ENCODE measurements at regions of chr7 and their contacts with region 1.

Region 1: GRCh38 chr7:43590862-43591550 is 8.1 kb downstream of the STK17A start:
- DNase-seq: no peak
- ATAC-seq: no peak
- H3K4me3 ChIP-seq: no peak overlapping the region
- H3K4me3 Mint-ChIP-seq: peak overlapping the region; percentile 62 to 96 (median 69)
- H3K27ac ChIP-seq: peak overlapping the region; percentile 95
- H3K27ac Mint-ChIP-seq: peak overlapping the region; percentile 80 to 86
- H3K4me1 ChIP-seq: peaks cover 46 to 79% of the 10 kb centered on the region in 2 experiments
- H3K4me1 Mint-ChIP-seq: peaks cover 83 to 89% (median 84%) of the 10 kb centered on the region in 3 donors
- H3K27me3 ChIP-seq: no peaks in the 10 kb centered on the region
- H3K27me3 Mint-ChIP-seq: no peaks in the 10 kb centered on the region

Region 2: GRCh38 chr7:43516581-43517342 is 74.2 kb before region 1 on chr7:
- CTCF ChIA-PET with region 1: no interaction called
- POLR2A ChIA-PET with region 1: no interaction called
- DNase-seq: peak in 1 of 35 experiments; percentile 4
- ATAC-seq: peak in 1 of 4 experiments; percentile 52
- H3K4me3 ChIP-seq: no peak overlapping the region
- H3K4me3 Mint-ChIP-seq: no peak overlapping the region
- H3K27ac ChIP-seq: no peak overlapping the region
- H3K27ac Mint-ChIP-seq: no peak overlapping the region
- H3K4me1 ChIP-seq: no peaks in the 10 kb centered on the region
- H3K4me1 Mint-ChIP-seq: peaks cover 2 to 7% (median 4%) of the 10 kb centered on the region in 3 donors
- H3K27me3 ChIP-seq: peaks cover 0 to 4% of the 10 kb centered on the region in 2 experiments
- H3K27me3 Mint-ChIP-seq: peaks cover 9 to 29% of the 10 kb centered on the region in 2 donors

Region 3: DNA sequence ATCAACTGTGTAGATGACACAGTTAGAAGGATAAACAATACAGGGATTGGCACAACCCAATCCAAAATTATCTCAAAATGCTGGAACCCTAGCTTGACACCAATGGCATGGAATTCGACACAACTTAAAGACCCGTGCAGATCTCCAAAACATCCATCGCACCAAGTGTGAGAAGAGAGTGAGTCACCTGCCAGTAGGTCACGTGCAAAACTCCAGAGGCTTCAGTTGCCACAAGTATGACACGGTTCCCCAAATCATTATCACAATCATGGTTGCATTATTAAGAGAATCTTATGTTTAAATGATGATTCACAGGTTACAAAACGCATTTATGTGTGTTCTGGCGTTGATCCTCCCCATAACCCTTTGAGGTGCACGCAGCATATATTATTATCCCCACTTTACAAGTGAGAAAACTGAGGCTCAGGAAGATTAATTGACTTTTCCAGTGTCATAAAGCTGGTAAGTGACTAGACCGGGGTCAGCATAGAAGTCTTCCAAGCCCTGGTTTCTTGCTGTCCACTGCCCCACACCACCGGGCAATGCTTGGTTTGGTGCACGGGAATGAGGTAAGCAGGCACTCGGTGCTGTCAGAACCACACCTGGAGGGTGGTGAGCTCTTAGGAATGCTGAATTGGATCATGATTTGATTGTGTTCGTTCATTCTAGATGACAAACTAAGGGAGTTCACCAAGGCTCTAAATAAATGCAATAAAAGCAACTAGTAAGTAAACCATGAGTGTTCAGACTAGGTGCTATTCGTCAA is 31.7 kb before region 1 on chr7:
- CTCF ChIA-PET with region 1: no interaction called
- POLR2A ChIA-PET with region 1: no interaction called
- DNase-seq: no peak
- ATAC-seq: no peak
- H3K4me3 ChIP-seq: no peak overlapping the region
- H3K4me3 Mint-ChIP-seq: no peak overlapping the region
- H3K27ac ChIP-seq: no peak overlapping the region
- H3K27ac Mint-ChIP-seq: no peak overlapping the region
- H3K4me1 ChIP-seq: peaks cover 5 to 10% of the 10 kb centered on the region in 2 experiments
- H3K4me1 Mint-ChIP-seq: peaks cover 17 to 23% (median 17%) of the 10 kb centered on the region in 3 donors
- H3K27me3 ChIP-seq: peaks cover 4 to 10% of the 10 kb centered on the region in 2 experiments
- H3K27me3 Mint-ChIP-seq: peaks cover 15 to 28% of the 10 kb centered on the region in 2 donors

Region 4: GRCh38 chr7:43602271-43602670 is 11.3 kb after region 1 on chr7:
- CTCF ChIA-PET with region 1: interaction called, 5 to 7 read pairs
- POLR2A ChIA-PET with region 1: interaction called, 8 to 13 read pairs
- DNase-seq: no peak
- ATAC-seq: no peak
- H3K4me3 ChIP-seq: no peak overlapping the region
- H3K4me3 Mint-ChIP-seq: no peak overlapping the region
- H3K27ac ChIP-seq: no peak overlapping the region
- H3K27ac Mint-ChIP-seq: no peak overlapping the region
- H3K4me1 ChIP-seq: peaks cover 52 to 53% of the 10 kb centered on the region in 2 experiments
- H3K4me1 Mint-ChIP-seq: peaks cover 49 to 51% (median 50%) of the 10 kb centered on the region in 3 donors
- H3K27me3 ChIP-seq: no peaks in the 10 kb centered on the region
- H3K27me3 Mint-ChIP-seq: no peaks in the 10 kb centered on the region

Region 5: DNA sequence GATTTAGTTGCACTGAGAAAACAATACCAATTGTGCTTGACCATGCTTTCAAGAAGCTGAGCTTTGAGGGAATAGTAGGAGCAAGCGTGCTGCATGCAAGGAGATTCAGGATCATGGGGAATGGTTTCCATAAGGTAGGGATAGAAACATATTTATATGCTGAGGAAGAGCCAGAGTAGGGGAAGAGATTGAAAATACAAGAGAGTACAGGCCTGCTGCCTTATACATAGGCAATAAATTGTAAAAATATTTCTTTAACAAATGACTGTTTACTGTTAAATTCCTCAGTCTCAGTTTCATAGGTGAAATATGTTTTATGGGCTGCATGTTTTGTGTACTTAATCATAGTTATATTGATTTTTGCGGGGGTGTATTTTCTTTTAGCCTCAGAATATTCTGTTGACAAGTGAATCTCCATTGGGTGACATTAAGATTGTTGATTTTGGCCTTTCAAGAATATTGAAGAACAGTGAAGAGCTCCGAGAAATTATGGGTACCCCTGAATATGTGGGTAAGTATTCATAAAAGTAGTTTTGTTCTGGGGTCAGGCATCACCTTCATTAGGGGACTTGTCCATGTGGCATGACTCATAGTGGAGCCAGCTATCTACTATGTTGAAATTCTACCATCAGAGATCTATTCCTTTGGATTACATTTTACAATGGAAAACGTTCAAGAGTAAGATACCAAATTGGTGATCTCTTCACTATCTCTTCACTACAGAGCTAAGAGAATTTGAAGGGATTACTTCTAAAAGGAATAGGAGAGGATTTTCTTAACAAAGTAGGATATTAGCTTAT is 28.4 kb after region 1 on chr7:
- CTCF ChIA-PET with region 1: interaction called, 9 to 15 read pairs
- POLR2A ChIA-PET with region 1: interaction called, 5 to 27 read pairs
- DNase-seq: no peak
- ATAC-seq: no peak
- H3K4me3 ChIP-seq: no peak overlapping the region
- H3K4me3 Mint-ChIP-seq: no peak overlapping the region
- H3K27ac ChIP-seq: peak overlapping the region; percentile 20
- H3K27ac Mint-ChIP-seq: no peak overlapping the region
- H3K4me1 ChIP-seq: peaks cover 67 to 72% of the 10 kb centered on the region in 2 experiments
- H3K4me1 Mint-ChIP-seq: peaks cover 7 to 54% (median 35%) of the 10 kb centered on the region in 3 donors
- H3K27me3 ChIP-seq: no peaks in the 10 kb centered on the region
- H3K27me3 Mint-ChIP-seq: no peaks in the 10 kb centered on the region

Region 6: DNA sequence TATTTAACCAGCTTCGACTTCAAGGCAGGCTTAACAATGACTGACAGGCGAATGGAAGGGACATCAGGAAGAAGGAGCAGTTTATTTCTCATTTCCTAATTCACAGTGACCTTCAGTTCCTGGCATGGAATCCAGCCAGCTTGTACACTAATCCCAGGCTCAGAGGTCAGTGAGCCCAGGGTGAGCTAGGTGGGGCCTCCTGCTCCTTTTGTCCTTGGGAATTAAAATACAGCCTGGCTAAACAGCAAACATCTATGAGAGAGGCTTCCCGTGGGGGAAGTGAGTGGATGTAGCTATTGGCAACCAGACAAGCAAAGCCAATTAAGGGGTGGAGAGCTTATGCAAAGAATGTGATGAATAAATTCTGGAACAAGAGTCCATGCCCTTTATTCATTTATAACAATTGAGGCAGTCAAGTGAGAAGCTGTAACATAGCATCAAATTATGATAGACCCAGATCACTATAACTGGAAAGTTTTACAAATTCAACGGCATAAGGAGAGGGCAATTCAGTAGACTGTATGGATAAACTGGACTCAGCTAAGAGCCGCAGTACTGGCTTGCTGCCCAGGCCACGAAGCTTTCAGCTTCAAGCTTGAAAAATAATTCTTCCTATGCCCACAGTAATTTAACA is 49.0 kb after region 1 on chr7:
- CTCF ChIA-PET with region 1: interaction called, 3 to 6 read pairs
- POLR2A ChIA-PET with region 1: interaction called, 3 to 10 read pairs
- DNase-seq: no peak
- ATAC-seq: no peak
- H3K4me3 ChIP-seq: no peak overlapping the region
- H3K4me3 Mint-ChIP-seq: peak overlapping the region in 1 of 3 donors; percentile 72
- H3K27ac ChIP-seq: peak overlapping the region; percentile 62
- H3K27ac Mint-ChIP-seq: peak overlapping the region; percentile 78 to 89
- H3K4me1 ChIP-seq: peaks cover 70 to 79% of the 10 kb centered on the region in 2 experiments
- H3K4me1 Mint-ChIP-seq: peaks cover 94 to 97% (median 96%) of the 10 kb centered on the region in 3 donors
- H3K27me3 ChIP-seq: no peaks in the 10 kb centered on the region
- H3K27me3 Mint-ChIP-seq: no peaks in the 10 kb centered on the region

Region 7: GRCh38 chr7:43869006-43869866 is 278.2 kb after region 1 on chr7 and contains the start of gene MRPS24:
- CTCF ChIA-PET with region 1: no interaction called
- POLR2A ChIA-PET with region 1: no interaction called
- DNase-seq: peak; percentile 88 to 98 (median 94)
- ATAC-seq: peak; percentile 97 to 99 (median 98)
- H3K4me3 ChIP-seq: peak within 1 kb of the TSS; percentile 72 to 83
- H3K4me3 Mint-ChIP-seq: peak within 1 kb of the TSS; percentile 90 to 95 (median 92)
- H3K27ac ChIP-seq: peak within 1 kb of the TSS; percentile 56
- H3K27ac Mint-ChIP-seq: peak within 1 kb of the TSS; percentile 89 to 93
- H3K4me1 ChIP-seq: peaks cover 13 to 17% of the 10 kb centered on the region in 2 experiments
- H3K4me1 Mint-ChIP-seq: peaks cover 22 to 25% (median 22%) of the 10 kb centered on the region in 3 donors
- H3K27me3 ChIP-seq: no peaks in the 10 kb centered on the region
- H3K27me3 Mint-ChIP-seq: no peaks in the 10 kb centered on the region
- total RNA-seq, gene MRPS24: 44.6 to 71.6 (median 58.4) TPM

Region 8: GRCh38 chr7:44065436-44066118 is 474.6 kb after region 1 on chr7 and contains the start of gene PGAM2:
- CTCF ChIA-PET with region 1: no interaction called
- POLR2A ChIA-PET with region 1: no interaction called
- DNase-seq: no peak
- ATAC-seq: peak in 3 of 4 experiments; percentile 20 to 62 (median 23)
- H3K4me3 ChIP-seq: no peak within 1 kb of the TSS
- H3K4me3 Mint-ChIP-seq: peak within 1 kb of the TSS in 1 of 3 donors; percentile 24
- H3K27ac ChIP-seq: no peak within 1 kb of the TSS
- H3K27ac Mint-ChIP-seq: peak within 1 kb of the TSS; percentile 43 to 66
- H3K4me1 ChIP-seq: peaks cover 0 to 37% of the 10 kb centered on the region in 2 experiments
- H3K4me1 Mint-ChIP-seq: peaks cover 27 to 38% (median 29%) of the 10 kb centered on the region in 3 donors
- H3K27me3 ChIP-seq: peaks cover 0 to 6% of the 10 kb centered on the region in 2 experiments
- H3K27me3 Mint-ChIP-seq: no peaks in the 10 kb centered on the region
- total RNA-seq, gene PGAM2: 1.1 to 2.9 (median 1.7) TPM